B cell (primary cell): ENCODE measurements at regions of chr1 and their contacts with region 1.

Region 1: GRCh38 chr1:147172168-147172992 is at the start of gene PRKAB2:
- DNase-seq: peak; percentile 97
- ATAC-seq: peak; percentile 88
- H3K4me3 ChIP-seq: peak within 1 kb of the TSS; percentile 86 to 93 (median 92)
- H3K4me3 Mint-ChIP-seq: peak within 1 kb of the TSS; percentile 95
- H3K27ac ChIP-seq: peak within 1 kb of the TSS; percentile 75 to 86
- H3K27ac Mint-ChIP-seq: peak within 1 kb of the TSS; percentile 94
- H3K4me1 ChIP-seq: peaks cover 21 to 22% of the 10 kb centered on the region in 2 donors
- H3K4me1 Mint-ChIP-seq: peaks cover 35% of the 10 kb centered on the region
- H3K27me3 ChIP-seq: no peaks in the 10 kb centered on the region
- H3K27me3 Mint-ChIP-seq: no peaks in the 10 kb centered on the region
- CTCF ChIP-seq: peak; percentile 88
- total RNA-seq, gene PRKAB2: 17.1 and 18.3 TPM in 2 replicates

Region 2: DNA sequence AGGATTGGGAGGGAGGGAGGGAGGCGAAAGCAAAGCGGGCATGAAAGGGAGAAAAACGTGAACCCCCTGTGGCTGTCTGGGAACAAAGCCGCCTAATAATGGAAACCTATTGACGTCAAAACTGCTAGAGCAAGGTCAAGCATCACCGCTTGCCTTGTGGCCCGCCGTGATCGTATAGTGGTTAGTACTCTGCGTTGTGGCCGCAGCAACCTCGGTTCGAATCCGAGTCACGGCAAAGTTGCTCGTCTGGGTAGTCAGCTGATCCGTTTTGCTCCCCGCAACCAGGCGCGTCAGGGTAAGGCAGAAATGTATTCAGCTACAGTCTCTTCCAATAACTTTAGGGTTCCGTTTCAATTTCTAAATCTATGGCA is 99.3 kb before region 1 on chr1:
- CTCF ChIA-PET with region 1: no interaction called
- POLR2A ChIA-PET with region 1: no interaction called
- intact Hi-C with region 1: no loop called
- DNase-seq: peak; percentile 77
- ATAC-seq: peak; percentile 77
- H3K4me3 ChIP-seq: peak overlapping the region in 4 of 5 experiments; percentile 49 to 63 (median 60)
- H3K4me3 Mint-ChIP-seq: peak overlapping the region; percentile 92
- H3K27ac ChIP-seq: peak overlapping the region in 1 of 2 donors; percentile 56
- H3K27ac Mint-ChIP-seq: peak overlapping the region; percentile 78
- H3K4me1 ChIP-seq: peaks cover 7 to 14% of the 10 kb centered on the region in 2 donors
- H3K4me1 Mint-ChIP-seq: peaks cover 23% of the 10 kb centered on the region
- H3K27me3 ChIP-seq: peaks cover 0 to 46% (median 24%) of the 10 kb centered on the region in 4 experiments
- H3K27me3 Mint-ChIP-seq: peaks cover 62% of the 10 kb centered on the region
- CTCF ChIP-seq: no peak

Region 3: DNA sequence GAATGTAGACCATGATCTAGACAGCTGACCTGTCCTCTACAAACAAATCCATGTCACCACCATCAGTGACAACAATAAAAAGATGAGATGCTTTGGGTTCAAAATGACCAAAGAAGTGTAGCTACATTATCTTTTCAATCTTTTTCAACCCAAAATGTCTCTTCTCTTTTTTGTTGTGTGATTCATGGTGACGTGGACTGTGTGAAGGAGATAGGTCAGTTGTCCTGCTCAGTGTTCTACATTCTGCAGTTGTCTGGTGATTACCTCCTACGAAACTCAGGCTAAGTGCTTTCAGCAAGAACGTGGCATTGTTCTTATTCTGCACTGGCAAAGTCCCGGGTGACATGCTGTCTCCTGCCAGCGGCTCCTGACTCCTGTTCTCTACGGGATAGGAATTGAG is 73.2 kb before region 1 on chr1:
- CTCF ChIA-PET with region 1: no interaction called
- POLR2A ChIA-PET with region 1: no interaction called
- intact Hi-C with region 1: no loop called
- DNase-seq: no peak
- ATAC-seq: no peak
- H3K4me3 ChIP-seq: no peak overlapping the region
- H3K4me3 Mint-ChIP-seq: no peak overlapping the region
- H3K27ac ChIP-seq: no peak overlapping the region
- H3K27ac Mint-ChIP-seq: no peak overlapping the region
- H3K4me1 ChIP-seq: peaks cover 0 to 4% of the 10 kb centered on the region in 2 donors
- H3K4me1 Mint-ChIP-seq: peaks cover 7% of the 10 kb centered on the region
- H3K27me3 ChIP-seq: no peaks in the 10 kb centered on the region
- H3K27me3 Mint-ChIP-seq: peaks cover 22% of the 10 kb centered on the region
- CTCF ChIP-seq: no peak

Region 4: DNA sequence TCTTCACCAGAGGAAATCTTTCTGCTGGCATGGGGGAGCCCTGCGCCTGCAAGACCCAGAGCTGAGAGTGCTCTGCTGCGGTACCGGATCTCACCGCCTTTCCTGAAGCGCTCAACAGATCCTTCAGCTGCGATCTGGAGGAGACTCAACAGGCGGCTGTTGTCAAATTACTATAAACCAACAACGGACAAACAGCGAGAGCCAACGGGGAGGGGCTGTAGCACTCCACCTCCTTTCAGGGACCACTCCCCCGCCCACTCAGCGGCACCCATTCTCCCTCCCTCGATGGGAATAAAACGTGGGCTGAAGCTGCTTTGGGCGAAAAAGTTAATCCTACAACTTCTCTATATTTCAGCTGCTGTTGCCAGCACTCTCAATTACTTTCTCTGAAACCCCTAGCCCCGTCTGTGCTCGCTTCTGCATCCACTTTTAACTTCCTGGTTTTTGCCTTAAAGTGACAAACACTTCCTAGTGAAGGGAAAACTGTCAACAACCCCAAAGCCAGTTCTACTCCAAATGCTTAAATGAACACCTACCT is 52.9 kb after region 1 on chr1 and contains the start of gene FMO5:
- CTCF ChIA-PET with region 1: interaction called, 8 read pairs
- POLR2A ChIA-PET with region 1: interaction called, 4 read pairs
- intact Hi-C with region 1: loop called (anchors 1 kb)
- DNase-seq: peak; percentile 67
- ATAC-seq: peak; percentile 91
- H3K4me3 ChIP-seq: peak within 1 kb of the TSS; percentile 75 to 94 (median 80)
- H3K4me3 Mint-ChIP-seq: peak within 1 kb of the TSS; percentile 96
- H3K27ac ChIP-seq: peak within 1 kb of the TSS; percentile 74 to 77
- H3K27ac Mint-ChIP-seq: peak within 1 kb of the TSS; percentile 95
- H3K4me1 ChIP-seq: peaks cover 10 to 13% of the 10 kb centered on the region in 2 donors
- H3K4me1 Mint-ChIP-seq: peaks cover 22% of the 10 kb centered on the region
- H3K27me3 ChIP-seq: no peaks in the 10 kb centered on the region
- H3K27me3 Mint-ChIP-seq: no peaks in the 10 kb centered on the region
- CTCF ChIP-seq: no peak
- total RNA-seq, gene FMO5: 4.4 and 5.5 TPM in 2 replicates

Region 5: GRCh38 chr1:147414500-147415163 is 242.3 kb after region 1 on chr1:
- CTCF ChIA-PET with region 1: no interaction called
- POLR2A ChIA-PET with region 1: no interaction called
- intact Hi-C with region 1: no loop called
- DNase-seq: no peak
- ATAC-seq: no peak
- H3K4me3 ChIP-seq: no peak overlapping the region
- H3K4me3 Mint-ChIP-seq: no peak overlapping the region
- H3K27ac ChIP-seq: no peak overlapping the region
- H3K27ac Mint-ChIP-seq: no peak overlapping the region
- H3K4me1 ChIP-seq: no peaks in the 10 kb centered on the region
- H3K4me1 Mint-ChIP-seq: no peaks in the 10 kb centered on the region
- H3K27me3 ChIP-seq: peaks cover 0 to 8% (median 4%) of the 10 kb centered on the region in 4 experiments
- H3K27me3 Mint-ChIP-seq: peaks cover 34% of the 10 kb centered on the region
- CTCF ChIP-seq: no peak